ENCODE measurements at regions of chr2 and their contacts with region 1.

Region 1: GRCh38 chr2:240840435-240841080 is 20.5 kb upstream of the KIF1A start:
- DNase-seq: peak; percentile 86
- ATAC-seq: peak; percentile 98
- H3K4me3 ChIP-seq: no peak overlapping the region
- H3K27ac ChIP-seq: no peak overlapping the region
- H3K4me1 ChIP-seq: no peaks in the 10 kb centered on the region
- H3K27me3 ChIP-seq: peaks cover 15 to 72% of the 10 kb centered on the region in 2 experiments
- CTCF ChIP-seq: peak; percentile 91
- EP300 ChIP-seq: no peak
- POLR2A ChIP-seq: no peak
- RAD21 ChIP-seq: peak; percentile 92

Region 2: GRCh38 chr2:240513549-240514287 is 326.8 kb before region 1 on chr2:
- CTCF ChIA-PET with region 1: no interaction called
- POLR2A ChIA-PET with region 1: no interaction called
- in situ Hi-C with region 1: no loop called
- intact Hi-C with region 1: loop called (anchors 1 kb)
- DNase-seq: peak; percentile 72
- ATAC-seq: peak; percentile 96
- H3K4me3 ChIP-seq: no peak overlapping the region
- H3K27ac ChIP-seq: no peak overlapping the region
- H3K4me1 ChIP-seq: no peaks in the 10 kb centered on the region
- H3K27me3 ChIP-seq: no peaks in the 10 kb centered on the region
- CTCF ChIP-seq: peak; percentile 98
- EP300 ChIP-seq: no peak
- POLR2A ChIP-seq: no peak
- RAD21 ChIP-seq: peak; percentile 86

Region 3: DNA sequence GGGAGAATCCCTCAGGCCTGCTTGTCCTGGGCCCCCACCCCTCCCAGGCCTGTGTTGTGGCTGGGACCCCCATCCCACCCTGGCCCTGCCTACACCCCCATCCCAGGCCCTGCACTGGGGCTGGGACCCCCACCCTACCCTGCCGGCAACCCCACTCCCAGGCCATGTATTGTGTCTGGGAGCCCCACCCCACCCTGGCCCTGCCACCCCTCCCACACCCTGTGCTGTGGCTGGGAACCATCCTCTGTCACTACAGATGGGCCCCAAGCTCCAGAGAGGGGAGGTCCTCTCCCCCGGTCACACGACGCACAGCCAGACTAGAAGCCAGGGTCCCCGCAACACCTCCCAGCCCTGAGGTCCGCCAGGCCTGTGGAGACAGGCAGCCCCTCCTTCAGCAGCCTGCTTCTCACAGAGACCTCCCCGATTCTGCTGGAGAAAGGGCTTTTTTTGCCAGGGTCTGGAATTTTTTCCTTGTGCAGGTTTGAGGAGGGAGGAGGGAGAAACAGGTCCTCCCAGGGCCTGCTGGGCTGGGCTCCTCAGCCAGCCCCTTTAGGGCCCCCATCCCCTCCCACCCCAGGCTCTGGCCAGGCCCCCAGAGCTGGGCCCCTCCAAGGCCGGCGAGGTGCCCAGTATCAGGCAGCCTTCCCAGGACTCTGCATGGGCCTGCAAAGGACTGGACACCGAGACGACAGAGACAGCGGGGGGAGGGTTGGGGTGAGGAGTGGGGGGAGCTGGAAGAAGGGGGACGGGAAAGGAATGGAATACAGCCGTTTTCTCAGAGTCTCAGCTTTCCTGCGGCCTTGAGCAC is 48.5 kb before region 1 on chr2:
- CTCF ChIA-PET with region 1: no interaction called
- POLR2A ChIA-PET with region 1: no interaction called
- in situ Hi-C with region 1: no loop called
- intact Hi-C with region 1: no loop called
- DNase-seq: no peak
- ATAC-seq: no peak
- H3K4me3 ChIP-seq: no peak overlapping the region
- H3K27ac ChIP-seq: no peak overlapping the region
- H3K4me1 ChIP-seq: peaks cover 19% of the 10 kb centered on the region
- H3K27me3 ChIP-seq: peaks cover 28 to 84% of the 10 kb centered on the region in 2 experiments
- CTCF ChIP-seq: no peak
- EP300 ChIP-seq: no peak
- POLR2A ChIP-seq: no peak
- RAD21 ChIP-seq: no peak

Region 4: DNA sequence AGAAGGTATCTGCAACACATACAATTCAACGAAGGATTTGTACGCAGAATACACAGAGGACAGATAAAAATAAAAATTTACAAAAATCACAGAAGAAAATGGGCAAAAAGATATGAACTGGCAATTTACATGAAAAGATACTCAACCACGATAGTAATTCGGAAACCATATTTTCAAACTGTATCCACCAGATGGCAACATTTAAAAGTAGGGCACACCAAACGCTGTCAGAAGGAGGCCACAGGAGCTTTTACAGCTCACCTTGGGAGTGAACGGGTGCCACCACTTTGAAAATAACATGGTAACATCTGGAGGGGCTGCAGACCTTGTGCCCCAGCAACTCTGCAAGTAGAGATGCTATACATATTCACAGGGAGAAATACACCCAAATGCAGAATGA is 30.4 kb before region 1 on chr2:
- CTCF ChIA-PET with region 1: interaction called, 19 read pairs
- POLR2A ChIA-PET with region 1: no interaction called
- in situ Hi-C with region 1: no loop called
- intact Hi-C with region 1: loop called (anchors 1 kb)
- DNase-seq: peak; percentile 24
- ATAC-seq: peak; percentile 45; the same call in 2 of the 3 replicates
- H3K4me3 ChIP-seq: no peak overlapping the region
- H3K27ac ChIP-seq: no peak overlapping the region
- H3K4me1 ChIP-seq: no peaks in the 10 kb centered on the region
- H3K27me3 ChIP-seq: peaks cover 0 to 25% of the 10 kb centered on the region in 2 experiments; a peak in 4 of 5 replicates
- CTCF ChIP-seq: peak; percentile 44
- EP300 ChIP-seq: no peak
- POLR2A ChIP-seq: no peak
- RAD21 ChIP-seq: no peak

Region 5: DNA sequence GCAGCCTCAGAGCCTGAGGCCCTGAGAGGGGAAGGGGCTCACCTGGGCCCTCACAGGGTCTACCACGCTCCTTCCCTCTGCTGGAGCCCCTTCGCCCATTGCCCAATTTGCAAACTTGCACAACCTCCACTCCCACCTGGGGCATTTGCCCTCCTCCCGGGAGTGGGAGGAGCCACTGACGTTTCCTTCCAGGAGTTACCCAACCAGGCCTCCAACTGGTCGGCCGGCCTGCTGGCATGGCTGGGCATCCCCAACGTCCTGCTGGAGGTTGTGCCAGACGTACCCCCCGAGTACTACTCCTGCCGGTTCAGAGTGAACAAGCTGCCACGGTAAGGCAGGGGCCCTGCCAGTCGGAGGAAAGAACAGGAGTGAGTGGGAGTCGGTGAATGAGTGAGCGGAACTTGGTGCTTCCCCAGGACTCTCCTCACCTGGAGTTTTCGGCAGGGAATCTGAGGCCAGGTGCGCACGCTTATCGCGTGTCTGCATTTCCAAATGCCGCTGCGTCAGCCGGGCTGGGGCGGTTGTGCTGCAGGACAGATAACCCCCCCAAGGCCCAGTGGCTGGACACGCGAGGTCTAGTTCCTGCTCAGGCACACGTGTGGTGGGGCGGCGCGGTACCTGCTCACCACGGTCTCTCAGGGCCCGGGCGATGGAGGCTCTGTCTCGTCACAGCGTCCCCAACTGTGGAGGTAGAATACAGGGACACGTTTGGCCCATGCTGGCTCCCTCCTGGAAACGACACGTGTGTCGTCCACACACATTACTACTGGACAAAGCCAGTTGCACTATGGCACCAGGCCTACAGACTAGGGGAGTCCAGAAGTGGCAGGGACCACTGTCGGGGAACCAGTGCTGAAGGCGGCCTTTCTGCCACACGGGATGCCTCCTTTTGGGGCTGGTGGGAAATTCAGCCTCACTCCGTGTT is 359.6 kb after region 1 on chr2:
- CTCF ChIA-PET with region 1: no interaction called
- POLR2A ChIA-PET with region 1: no interaction called
- in situ Hi-C with region 1: loop called (anchors 5 kb)
- intact Hi-C with region 1: no loop called
- DNase-seq: no peak
- ATAC-seq: no peak
- H3K4me3 ChIP-seq: no peak overlapping the region
- H3K27ac ChIP-seq: no peak overlapping the region
- H3K4me1 ChIP-seq: peaks cover 27% of the 10 kb centered on the region
- H3K27me3 ChIP-seq: peaks cover 20 to 73% of the 10 kb centered on the region in 2 experiments
- CTCF ChIP-seq: no peak
- EP300 ChIP-seq: no peak
- POLR2A ChIP-seq: no peak
- RAD21 ChIP-seq: no peak